Sciatic nerve (tissue), 2 donors: ENCODE measurements at regions of chr2 and their contacts with region 1.

Region 1: GRCh38 chr2:107801498-107801897 is 25.2 kb upstream of the RGPD4 start:
- DNase-seq: no peak
- ATAC-seq: no peak

Region 2: DNA sequence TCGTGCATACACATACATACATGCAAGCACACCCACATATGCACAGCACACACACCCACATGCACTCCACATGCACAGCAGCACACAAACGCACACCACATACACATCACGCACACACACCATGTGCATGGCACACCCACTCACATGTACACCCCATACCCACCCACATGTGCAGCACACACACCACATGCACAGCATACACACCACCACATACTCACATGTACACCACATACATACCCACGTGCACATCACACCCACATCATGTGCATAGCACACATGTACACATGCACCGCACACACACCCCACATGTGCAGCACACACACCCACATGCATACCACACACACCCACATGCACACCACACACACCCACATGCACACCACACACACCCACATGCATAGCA is 106.8 kb before region 1 on chr2:
- intact Hi-C with region 1: loop called (anchors 1 kb)
- DNase-seq: no peak
- ATAC-seq: peak; percentile 48

Region 3: GRCh38 chr2:107817378-107817777 is 15.9 kb after region 1 on chr2:
- intact Hi-C with region 1: loop called (anchors 1 kb)
- DNase-seq: no peak
- ATAC-seq: peak; percentile 94

Region 4: GRCh38 chr2:108013305-108013704 is 211.8 kb after region 1 on chr2:
- intact Hi-C with region 1: no loop called
- DNase-seq: no peak
- ATAC-seq: no peak

Region 5: DNA sequence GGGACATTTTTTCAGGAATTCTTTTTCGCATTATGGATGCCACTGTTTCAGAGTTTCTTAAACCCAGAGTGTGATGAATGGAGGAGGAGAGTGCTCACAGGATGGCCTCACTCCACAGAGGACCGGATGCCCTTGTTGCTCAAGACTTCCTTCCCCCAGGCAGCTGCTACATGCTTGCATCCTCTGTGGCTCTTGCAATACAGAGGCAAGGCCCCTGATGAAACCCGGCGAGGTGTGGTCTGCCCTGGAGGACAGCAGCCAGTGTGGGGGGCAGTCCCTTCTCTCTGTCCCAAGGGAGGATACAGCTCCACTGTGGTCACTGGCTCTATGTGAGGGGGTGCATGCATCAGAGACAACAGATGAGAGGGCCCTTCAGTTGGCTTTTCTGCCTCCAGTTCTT is 1437.1 kb after region 1 on chr2:
- intact Hi-C with region 1: no loop called
- DNase-seq: peak; percentile 74
- ATAC-seq: peak; percentile 69